ENCODE measurements at regions of chr1 and their contacts with region 1.

Region 1: DNA sequence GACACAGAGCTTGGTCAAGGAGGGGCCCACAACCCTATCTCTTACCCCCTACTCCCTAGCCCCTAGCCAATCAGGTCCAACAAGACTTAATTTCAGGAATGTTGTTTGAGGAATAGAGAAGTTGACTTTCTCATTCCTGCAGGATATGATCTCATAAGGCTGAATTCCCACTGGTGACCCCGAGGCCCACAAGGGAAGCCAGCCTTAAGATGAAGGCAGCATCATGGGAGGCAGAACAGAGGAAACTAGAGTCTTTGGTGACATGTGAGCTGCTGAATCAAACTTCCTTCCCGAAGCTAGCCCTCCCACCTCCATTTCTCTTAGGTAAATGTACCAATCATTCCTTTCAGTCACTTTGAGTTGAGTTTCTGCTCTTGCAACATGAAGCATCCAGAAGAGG is 9.1 kb upstream of the PDIK1L start:
- DNase-seq: no peak

Region 2: DNA sequence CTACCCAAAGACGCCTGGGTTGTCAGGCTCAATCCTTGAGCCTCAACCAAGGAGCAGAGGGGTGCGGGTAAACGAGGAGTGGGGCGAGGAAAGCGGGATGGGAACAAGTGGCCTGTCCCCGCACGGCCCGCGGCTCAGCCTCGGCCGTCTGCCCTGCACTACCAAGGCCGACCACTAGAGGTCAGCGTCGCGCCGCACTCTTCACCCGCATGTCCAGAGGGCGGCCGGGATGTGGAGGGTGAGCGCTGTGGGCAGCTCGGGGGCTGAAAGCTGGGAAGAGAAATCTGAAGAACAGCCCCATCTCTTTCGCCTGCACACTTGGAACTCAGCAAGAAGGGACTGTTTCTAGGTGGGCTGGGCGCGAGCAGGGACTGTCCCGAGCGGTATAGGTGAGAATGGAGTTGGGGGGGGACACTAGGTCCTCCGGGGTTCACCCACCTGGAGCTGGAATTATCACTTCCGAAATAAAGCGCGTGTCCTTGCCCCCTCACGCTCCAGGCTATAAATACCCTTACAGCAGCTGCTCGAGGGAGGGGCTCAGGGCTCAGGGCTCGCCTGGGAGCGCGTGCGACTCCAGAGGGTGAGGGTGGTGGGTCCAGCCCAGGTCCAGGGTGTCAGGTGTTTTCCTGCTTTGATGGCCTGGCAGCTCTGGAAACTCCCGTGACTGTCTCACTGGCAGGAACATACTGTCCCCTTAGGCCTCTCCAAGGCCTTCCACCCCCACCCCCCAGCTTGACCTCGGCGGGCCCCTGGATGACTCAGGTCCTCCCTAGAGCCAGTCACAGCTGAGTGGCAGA is 66.4 kb before region 1 on chr1:
- intact Hi-C with region 1: loop called (anchors 5 kb)
- DNase-seq: peak; percentile 67 to 94 (median 86)

Region 3: GRCh38 chr1:26145041-26145959 is 42.8 kb after region 1 on chr1:
- intact Hi-C with region 1: loop called (anchors 2 kb)
- DNase-seq: peak; percentile 66 to 96 (median 87)

Region 4: GRCh38 chr1:26321315-26322041 is 219.0 kb after region 1 on chr1:
- intact Hi-C with region 1: loop called (anchors 10 kb)
- DNase-seq: peak; percentile 88 to 98 (median 95)